Activated CD8-positive, alpha-beta T cell treated with anti-CD3 and anti-CD28 coated beads, Interleukin-2, amount 10 ng/mL, durations not matched to agents 7 days and 5 days (primary cell): ENCODE measurements at regions of chr12 and their contacts with region 1.

Region 1: DNA sequence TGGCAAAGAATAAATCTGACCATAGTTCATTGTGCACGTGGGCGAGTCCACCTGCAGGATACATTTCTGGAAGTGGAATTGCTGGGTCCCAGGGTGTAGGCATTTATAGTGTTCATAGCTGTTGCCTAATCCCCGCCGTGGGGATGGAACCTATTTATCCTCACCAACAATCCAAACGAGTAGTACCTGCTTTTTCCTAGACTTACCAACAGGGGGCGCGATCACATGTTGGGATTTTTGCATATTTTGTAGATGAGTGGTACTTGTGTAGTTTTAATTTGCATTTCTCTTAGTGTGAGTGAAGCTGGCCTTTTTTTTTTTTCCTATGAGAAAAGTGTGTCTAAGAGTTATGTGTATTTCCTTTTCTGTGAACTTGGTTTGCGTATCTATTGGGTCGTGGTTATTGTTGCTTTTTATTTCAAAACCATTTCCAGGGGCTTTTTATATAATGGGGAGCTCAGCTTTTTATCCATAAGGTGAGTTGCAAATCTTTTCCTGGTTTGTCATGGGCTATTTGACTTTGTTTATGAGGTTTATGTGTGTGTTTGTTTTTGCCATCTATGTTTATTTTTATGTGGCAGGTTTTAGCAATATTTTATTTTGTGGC is 67.2 kb downstream of the CCDC92 start:
- DNase-seq: peak; percentile 76
- ATAC-seq: peak; percentile 35
- H3K4me3 Mint-ChIP-seq: no peak overlapping the region
- H3K27ac Mint-ChIP-seq: no peak overlapping the region
- H3K4me1 Mint-ChIP-seq: peaks cover 12% of the 10 kb centered on the region
- H3K27me3 Mint-ChIP-seq: no peaks in the 10 kb centered on the region

Region 2: DNA sequence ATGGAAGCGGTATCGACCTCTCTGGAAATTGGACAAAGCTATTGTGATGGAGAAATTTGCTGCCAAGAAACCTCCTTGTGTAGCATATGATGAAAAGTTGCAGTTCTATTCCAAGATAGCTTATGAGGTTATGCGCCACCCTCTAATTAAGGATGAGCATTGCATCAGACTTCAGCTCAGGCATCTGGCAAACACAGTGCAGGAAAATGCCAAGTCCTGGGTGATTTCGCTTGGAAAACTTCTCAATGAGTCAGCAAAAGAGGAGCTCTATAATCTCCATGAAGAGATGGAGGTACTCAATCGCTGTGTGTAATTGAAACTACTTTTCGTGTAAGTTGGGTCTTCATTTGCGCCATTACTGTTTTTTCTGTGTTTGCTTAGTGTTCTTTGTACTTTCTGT is 92.1 kb before region 1 on chr12:
- CTCF ChIA-PET with region 1: no interaction called
- POLR2A ChIA-PET with region 1: no interaction called
- DNase-seq: no peak
- ATAC-seq: no peak
- H3K4me3 Mint-ChIP-seq: no peak overlapping the region
- H3K27ac Mint-ChIP-seq: no peak overlapping the region
- H3K4me1 Mint-ChIP-seq: no peaks in the 10 kb centered on the region
- H3K27me3 Mint-ChIP-seq: peaks cover 6% of the 10 kb centered on the region

Region 3: GRCh38 chr12:123843912-123844748 is 61.3 kb before region 1 on chr12:
- CTCF ChIA-PET with region 1: no interaction called
- POLR2A ChIA-PET with region 1: no interaction called
- DNase-seq: no peak
- ATAC-seq: no peak
- H3K4me3 Mint-ChIP-seq: no peak overlapping the region
- H3K27ac Mint-ChIP-seq: no peak overlapping the region
- H3K4me1 Mint-ChIP-seq: no peaks in the 10 kb centered on the region
- H3K27me3 Mint-ChIP-seq: no peaks in the 10 kb centered on the region

Region 4: DNA sequence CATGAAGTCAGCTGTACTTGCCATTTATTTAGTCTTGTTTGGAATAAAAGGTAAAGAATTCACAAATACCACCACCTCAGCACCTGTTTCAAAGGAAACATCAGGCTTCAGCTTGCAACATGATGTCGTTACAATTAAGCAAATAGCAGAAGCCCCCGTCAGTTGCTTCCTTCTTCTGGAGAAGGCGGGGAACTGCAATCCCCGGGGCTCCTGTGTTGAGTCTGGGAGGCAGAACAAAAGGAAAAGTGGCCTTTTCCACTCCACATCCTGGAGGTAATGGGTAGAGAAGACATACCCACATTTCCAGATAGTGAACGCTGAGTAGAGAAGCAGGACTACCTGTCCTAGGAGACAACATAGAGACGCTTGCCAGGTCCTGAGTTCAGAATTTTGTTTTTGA is 50.5 kb before region 1 on chr12:
- CTCF ChIA-PET with region 1: no interaction called
- POLR2A ChIA-PET with region 1: no interaction called
- DNase-seq: no peak
- ATAC-seq: no peak
- H3K4me3 Mint-ChIP-seq: no peak overlapping the region
- H3K27ac Mint-ChIP-seq: no peak overlapping the region
- H3K4me1 Mint-ChIP-seq: no peaks in the 10 kb centered on the region
- H3K27me3 Mint-ChIP-seq: peaks cover 5% of the 10 kb centered on the region

Region 5: DNA sequence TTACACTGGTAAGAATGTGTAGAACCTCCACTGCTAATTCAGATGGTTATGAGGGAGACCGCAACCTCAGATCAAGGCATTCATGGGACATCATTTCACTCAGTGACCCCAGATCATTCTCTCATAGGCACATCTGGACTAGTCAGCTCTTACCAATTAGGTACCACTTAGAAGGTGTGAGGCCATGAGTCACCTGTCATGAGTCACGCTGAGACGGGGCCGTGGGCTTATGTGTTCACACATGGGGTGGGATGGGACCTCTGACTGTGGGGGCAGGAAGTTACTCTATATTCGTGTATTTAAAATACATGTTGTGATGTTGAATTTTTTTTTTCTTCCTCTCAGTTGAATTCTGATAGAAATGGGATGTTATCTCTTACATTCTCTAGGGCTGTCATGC is 11.3 kb after region 1 on chr12:
- CTCF ChIA-PET with region 1: interaction called, 11 read pairs
- POLR2A ChIA-PET with region 1: no interaction called
- DNase-seq: peak; percentile 38
- ATAC-seq: no peak
- H3K4me3 Mint-ChIP-seq: no peak overlapping the region
- H3K27ac Mint-ChIP-seq: no peak overlapping the region
- H3K4me1 Mint-ChIP-seq: peaks cover 5% of the 10 kb centered on the region
- H3K27me3 Mint-ChIP-seq: peaks cover 3% of the 10 kb centered on the region

Region 6: GRCh38 chr12:123931686-123932321 is 26.4 kb after region 1 on chr12:
- CTCF ChIA-PET with region 1: interaction called, 11 read pairs
- POLR2A ChIA-PET with region 1: no interaction called
- DNase-seq: peak; percentile 59
- ATAC-seq: peak; percentile 78
- H3K4me3 Mint-ChIP-seq: no peak overlapping the region
- H3K27ac Mint-ChIP-seq: no peak overlapping the region
- H3K4me1 Mint-ChIP-seq: peaks cover 42% of the 10 kb centered on the region
- H3K27me3 Mint-ChIP-seq: peaks cover 4% of the 10 kb centered on the region